Posterior cingulate gyrus (tissue), 11 donors: ENCODE measurements at regions of chr16 and their contacts with region 1.

Region 1: GRCh38 chr16:89873972-89874689 is 739 bp downstream of the TCF25 start:
- DNase-seq: peak; percentile 88 to 99 (median 94)

Region 2: GRCh38 chr16:89815639-89816348 is 58.3 kb before region 1 on chr16:
- intact Hi-C with region 1: loop called (anchors 5 kb)
- DNase-seq: peak in 2 of 10 donors; percentile 63 to 69